Endothelial cell of umbilical vein (primary cell): ENCODE measurements at regions of chr4 and their contacts with region 1.

Region 1: GRCh38 chr4:150010525-150011126 is 67.6 kb upstream of the DCLK2 start:
- DNase-seq: peak; percentile 69
- H3K4me3 ChIP-seq: no peak overlapping the region
- H3K27ac ChIP-seq: no peak overlapping the region
- H3K4me1 ChIP-seq: no peaks in the 10 kb centered on the region
- H3K27me3 ChIP-seq: no peaks in the 10 kb centered on the region
- CTCF ChIP-seq: peak; percentile 42 to 49
- POLR2A ChIP-seq: no peak

Region 2: GRCh38 chr4:150217192-150217591 is 206.6 kb after region 1 on chr4:
- CTCF ChIA-PET with region 1: interaction called, 299 read pairs
- POLR2A ChIA-PET with region 1: no interaction called
- dilution Hi-C with region 1: no loop called
- intact Hi-C with region 1: no loop called
- DNase-seq: peak; percentile 45
- H3K4me3 ChIP-seq: no peak overlapping the region
- H3K27ac ChIP-seq: no peak overlapping the region
- H3K4me1 ChIP-seq: no peaks in the 10 kb centered on the region
- H3K27me3 ChIP-seq: no peaks in the 10 kb centered on the region
- CTCF ChIP-seq: peak in 1 of 2 donors; percentile 5
- POLR2A ChIP-seq: no peak